ENCODE measurements at regions of chr6 and their contacts with region 1.

Region 1: DNA sequence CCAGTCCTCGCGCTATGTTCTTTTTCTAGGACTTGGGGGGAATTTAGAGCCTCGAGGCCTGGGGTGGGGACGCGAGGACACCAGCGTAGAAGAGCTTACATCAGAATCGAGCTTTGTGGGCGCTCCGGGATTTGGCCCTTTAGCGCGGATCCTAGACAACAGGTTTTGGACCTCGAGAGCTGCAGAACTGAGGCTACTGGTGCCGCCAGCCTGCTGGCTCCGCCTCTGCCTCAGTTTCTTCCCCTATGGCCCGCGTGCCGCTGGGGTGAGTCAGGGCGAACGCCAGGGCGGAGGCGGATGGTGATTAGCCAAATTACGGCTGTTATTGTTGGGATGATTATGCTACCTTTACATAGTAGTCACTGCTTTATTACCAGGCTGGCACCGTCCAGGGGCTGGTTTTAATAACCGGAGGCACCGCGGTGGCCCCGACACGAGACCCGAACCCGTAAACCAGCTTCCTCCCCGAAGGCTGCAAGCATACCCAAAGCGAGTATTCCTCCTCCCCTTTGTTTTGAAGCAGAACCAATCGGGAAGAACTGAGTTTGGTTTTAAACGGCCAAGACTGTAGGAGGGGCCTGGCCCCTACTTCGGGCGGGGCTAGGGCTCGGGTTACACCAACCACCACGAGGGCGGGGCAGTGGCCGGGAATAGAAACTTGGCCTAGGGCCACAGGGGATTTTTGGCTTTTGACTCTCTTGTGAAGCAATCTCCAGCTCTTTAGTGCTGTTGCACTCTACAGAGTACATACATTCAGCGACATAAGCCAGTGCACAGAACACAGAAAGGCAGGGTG is 639 bp upstream of the GTPBP2 start:
- DNase-seq: peak; percentile 82 to 96 (median 86)
- H3K4me3 ChIP-seq: peak overlapping the region; percentile 89 to 95
- H3K4me3 Mint-ChIP-seq: peak overlapping the region; percentile 98 to 100 (median 99)
- H3K27ac ChIP-seq: peak overlapping the region; percentile 84
- H3K27ac Mint-ChIP-seq: peak overlapping the region; percentile 97 to 99 (median 98)
- H3K4me1 ChIP-seq: peaks cover 33% of the 10 kb centered on the region
- H3K4me1 Mint-ChIP-seq: peaks cover 29 to 51% (median 35%) of the 10 kb centered on the region in 4 donors
- H3K27me3 ChIP-seq: no peaks in the 10 kb centered on the region
- H3K27me3 Mint-ChIP-seq: no peaks in the 10 kb centered on the region

Region 2: DNA sequence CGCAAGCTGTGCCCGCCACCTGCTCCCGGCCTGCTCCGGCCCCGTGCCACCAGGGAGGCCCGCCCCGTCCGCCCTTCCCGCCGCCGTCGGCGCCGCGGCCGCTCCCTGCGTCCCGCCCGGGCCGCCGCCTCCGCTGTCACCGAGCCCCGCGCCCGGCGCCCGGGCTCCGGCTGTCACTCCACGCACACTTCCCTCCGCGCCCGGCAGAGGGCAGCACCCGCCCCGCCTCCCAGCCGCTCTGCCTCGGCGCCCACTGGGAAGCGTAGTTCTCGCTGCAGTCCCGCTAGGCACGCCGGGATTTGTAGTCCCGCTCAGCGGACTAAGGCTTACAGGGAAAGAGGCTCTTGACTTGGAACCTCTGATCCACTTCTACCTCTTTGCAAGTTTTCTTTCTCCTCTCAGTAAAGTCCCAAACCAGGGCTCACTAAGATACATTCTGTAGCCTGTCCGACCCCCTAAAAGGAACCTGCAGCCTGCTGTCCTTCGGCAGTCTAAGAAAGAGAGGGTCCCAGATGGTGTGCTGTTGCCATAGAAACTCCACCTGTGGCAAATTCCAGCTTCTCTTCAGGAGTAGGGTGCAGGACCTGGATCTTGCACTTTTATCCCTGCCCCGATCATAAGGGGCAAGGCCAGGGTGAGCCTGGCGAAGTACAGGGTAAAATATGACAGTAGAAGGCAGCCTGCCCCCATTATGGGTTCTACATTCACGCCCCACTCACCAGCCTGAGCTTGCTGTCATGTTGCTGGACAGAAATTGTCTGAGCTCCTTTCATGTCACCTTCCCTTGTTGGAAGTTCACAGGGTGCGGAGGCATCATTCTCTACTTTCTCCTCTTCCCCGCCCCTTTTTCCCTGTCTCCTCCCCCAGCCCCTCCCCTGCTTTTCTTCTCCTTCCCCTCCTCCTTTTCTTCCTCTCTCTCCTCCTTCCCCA is 1894.0 kb before region 1 on chr6 and contains the start of gene TFEB:
- CTCF ChIA-PET with region 1: no interaction called
- POLR2A ChIA-PET with region 1: no interaction called
- intact Hi-C with region 1: loop called (anchors 10 kb)
- DNase-seq: peak; percentile 92 to 95 (median 92)
- H3K4me3 ChIP-seq: peak within 1 kb of the TSS in 1 of 2 donors; percentile 64
- H3K4me3 Mint-ChIP-seq: peak within 1 kb of the TSS; percentile 77 to 91 (median 82)
- H3K27ac ChIP-seq: peak within 1 kb of the TSS; percentile 75
- H3K27ac Mint-ChIP-seq: peak within 1 kb of the TSS; percentile 42 to 93 (median 76)
- H3K4me1 ChIP-seq: peaks cover 38% of the 10 kb centered on the region
- H3K4me1 Mint-ChIP-seq: peaks cover 16 to 35% (median 26%) of the 10 kb centered on the region in 4 donors
- H3K27me3 ChIP-seq: no peaks in the 10 kb centered on the region
- H3K27me3 Mint-ChIP-seq: peaks cover 0 to 1% of the 10 kb centered on the region in 2 donors
- total RNA-seq, gene TFEB: 12.2 to 15.7 TPM

Region 3: GRCh38 chr6:43427406-43428111 is 202.1 kb before region 1 on chr6 and contains the start of gene ABCC10:
- CTCF ChIA-PET with region 1: no interaction called
- POLR2A ChIA-PET with region 1: no interaction called
- intact Hi-C with region 1: loop called (anchors 2 kb)
- DNase-seq: peak; percentile 93 to 97 (median 95)
- H3K4me3 ChIP-seq: peak within 1 kb of the TSS; percentile 70 to 95
- H3K4me3 Mint-ChIP-seq: peak within 1 kb of the TSS; percentile 92 to 98 (median 96)
- H3K27ac ChIP-seq: peak within 1 kb of the TSS; percentile 79
- H3K27ac Mint-ChIP-seq: peak within 1 kb of the TSS; percentile 88 to 99 (median 98)
- H3K4me1 ChIP-seq: peaks cover 30% of the 10 kb centered on the region
- H3K4me1 Mint-ChIP-seq: peaks cover 20 to 28% (median 24%) of the 10 kb centered on the region in 4 donors
- H3K27me3 ChIP-seq: no peaks in the 10 kb centered on the region
- H3K27me3 Mint-ChIP-seq: no peaks in the 10 kb centered on the region
- total RNA-seq, gene ABCC10: 69.9 to 80.0 TPM

Region 4: DNA sequence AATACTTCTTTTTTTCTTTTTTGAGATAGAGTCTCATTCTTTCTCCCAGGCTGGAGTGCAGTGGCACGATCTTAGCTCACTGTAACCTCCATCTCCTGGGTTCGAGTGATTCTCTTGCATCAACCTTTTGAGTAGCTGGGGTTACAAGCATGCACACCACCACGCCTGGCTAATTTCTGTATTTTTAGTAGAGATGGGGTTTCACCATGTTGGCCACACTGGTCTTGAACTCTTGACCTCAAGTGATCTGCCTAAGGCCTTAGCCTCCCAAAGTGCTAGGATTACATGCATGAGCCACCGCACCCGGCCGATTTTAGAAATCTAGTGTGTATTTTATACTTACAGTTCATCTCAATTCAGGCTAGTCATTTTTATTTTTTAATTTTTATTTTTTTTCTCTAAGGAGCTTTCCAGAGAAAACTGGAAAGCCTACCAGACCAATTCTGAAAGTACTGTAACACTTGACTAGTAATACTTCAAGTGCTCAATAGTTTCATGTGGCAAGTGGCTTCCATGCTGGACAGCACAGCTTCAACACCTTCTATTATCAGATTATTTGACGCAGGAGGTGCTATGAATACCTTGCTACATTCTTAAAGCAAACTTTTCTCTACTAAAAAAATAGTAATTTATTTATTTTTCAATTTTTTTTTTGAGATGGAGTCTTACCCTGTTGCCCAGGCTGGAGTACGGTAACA is 87.8 kb before region 1 on chr6:
- CTCF ChIA-PET with region 1: no interaction called
- POLR2A ChIA-PET with region 1: no interaction called
- intact Hi-C with region 1: no loop called
- DNase-seq: no peak
- H3K4me3 ChIP-seq: no peak overlapping the region
- H3K4me3 Mint-ChIP-seq: no peak overlapping the region
- H3K27ac ChIP-seq: no peak overlapping the region
- H3K27ac Mint-ChIP-seq: no peak overlapping the region
- H3K4me1 ChIP-seq: no peaks in the 10 kb centered on the region
- H3K4me1 Mint-ChIP-seq: peaks cover 0 to 3% (median 2%) of the 10 kb centered on the region in 4 donors
- H3K27me3 ChIP-seq: no peaks in the 10 kb centered on the region
- H3K27me3 Mint-ChIP-seq: no peaks in the 10 kb centered on the region

Region 5: DNA sequence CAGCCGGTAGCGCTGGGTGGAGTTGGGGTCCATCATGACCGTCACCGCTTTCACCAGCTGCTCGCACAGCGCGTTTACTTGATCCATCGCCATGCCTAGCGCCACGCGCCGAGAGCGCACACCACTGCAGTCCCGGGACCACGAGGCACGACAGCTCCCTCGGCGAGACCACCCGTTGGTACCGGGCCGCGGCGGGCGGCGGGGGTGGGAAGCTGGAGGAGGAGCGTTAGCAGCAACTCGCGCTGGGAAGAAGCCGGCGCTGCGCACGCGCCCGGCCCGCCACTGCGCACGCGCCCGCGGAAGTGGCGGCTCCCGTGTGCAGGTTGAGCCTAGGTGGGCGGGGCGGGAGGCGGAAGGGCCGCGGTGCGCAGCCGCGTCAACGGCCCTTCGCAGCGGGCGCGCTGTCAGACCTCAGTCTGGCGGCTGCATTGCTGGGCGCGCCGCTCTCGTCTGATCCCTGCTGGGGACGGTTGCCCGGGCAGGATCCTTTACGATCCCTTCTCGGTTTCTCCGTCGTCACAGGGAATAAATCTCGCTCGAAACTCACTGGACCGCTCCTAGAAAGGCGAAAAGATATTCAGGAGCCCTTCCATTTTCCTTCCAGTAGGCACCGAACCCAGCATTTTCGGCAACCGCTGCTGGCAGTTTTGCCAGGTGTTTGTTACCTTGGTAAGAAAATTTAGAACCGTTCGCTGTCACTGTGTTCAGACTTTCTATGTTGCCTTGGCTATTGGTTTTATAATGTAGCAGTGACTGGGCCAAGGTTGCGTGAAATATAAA is 53.7 kb before region 1 on chr6 and contains the starts of genes POLH and XPO5:
- CTCF ChIA-PET with region 1: no interaction called
- POLR2A ChIA-PET with region 1: interaction called, 12 read pairs
- intact Hi-C with region 1: loop called (anchors 2 kb)
- DNase-seq: peak; percentile 88 to 90 (median 90)
- H3K4me3 ChIP-seq: peak within 1 kb of the TSS; percentile 71 to 82
- H3K4me3 Mint-ChIP-seq: peak within 1 kb of the TSS; percentile 93 to 99 (median 98)
- H3K27ac ChIP-seq: peak within 1 kb of the TSS; percentile 79
- H3K27ac Mint-ChIP-seq: peak within 1 kb of the TSS; percentile 85 to 96 (median 95)
- H3K4me1 ChIP-seq: peaks cover 33% of the 10 kb centered on the region
- H3K4me1 Mint-ChIP-seq: peaks cover 23 to 48% (median 36%) of the 10 kb centered on the region in 4 donors
- H3K27me3 ChIP-seq: no peaks in the 10 kb centered on the region
- H3K27me3 Mint-ChIP-seq: no peaks in the 10 kb centered on the region
- total RNA-seq, gene POLH: 27.1 to 31.9 TPM
- total RNA-seq, gene XPO5: 42.2 to 43.4 TPM

Region 6: GRCh38 chr6:43644931-43645612 is 15.4 kb after region 1 on chr6 and contains the start of gene RSPH9:
- CTCF ChIA-PET with region 1: interaction called, 3 read pairs
- POLR2A ChIA-PET with region 1: interaction called, 28 read pairs
- intact Hi-C with region 1: no loop called
- DNase-seq: peak; percentile 38 to 81 (median 45)
- H3K4me3 ChIP-seq: peak within 1 kb of the TSS in 1 of 2 donors; percentile 32
- H3K4me3 Mint-ChIP-seq: peak within 1 kb of the TSS; percentile 77 to 86 (median 80)
- H3K27ac ChIP-seq: peak within 1 kb of the TSS; percentile 6
- H3K27ac Mint-ChIP-seq: peak within 1 kb of the TSS; percentile 52 to 88 (median 74)
- H3K4me1 ChIP-seq: peaks cover 5% of the 10 kb centered on the region
- H3K4me1 Mint-ChIP-seq: peaks cover 11 to 34% (median 22%) of the 10 kb centered on the region in 4 donors
- H3K27me3 ChIP-seq: no peaks in the 10 kb centered on the region
- H3K27me3 Mint-ChIP-seq: no peaks in the 10 kb centered on the region
- total RNA-seq, gene RSPH9: not detected

Region 7: GRCh38 chr6:43790025-43790523 is 160.4 kb after region 1 on chr6:
- CTCF ChIA-PET with region 1: no interaction called
- POLR2A ChIA-PET with region 1: no interaction called
- intact Hi-C with region 1: no loop called
- DNase-seq: no peak
- H3K4me3 ChIP-seq: no peak overlapping the region
- H3K4me3 Mint-ChIP-seq: no peak overlapping the region
- H3K27ac ChIP-seq: no peak overlapping the region
- H3K27ac Mint-ChIP-seq: no peak overlapping the region
- H3K4me1 ChIP-seq: no peaks in the 10 kb centered on the region
- H3K4me1 Mint-ChIP-seq: no peaks in the 10 kb centered on the region
- H3K27me3 ChIP-seq: no peaks in the 10 kb centered on the region
- H3K27me3 Mint-ChIP-seq: peaks cover 0 to 11% of the 10 kb centered on the region in 2 donors